ENCODE measurements at regions of chr1 and their contacts with region 1.

Region 1: GRCh38 chr1:85109475-85109874 is 61.2 kb upstream of the MCOLN3 start:
- DNase-seq: peak; percentile 54
- ATAC-seq: peak; percentile 99
- H3K4me3 ChIP-seq: no peak overlapping the region
- H3K27ac ChIP-seq: no peak overlapping the region
- H3K4me1 ChIP-seq: no peaks in the 10 kb centered on the region
- H3K27me3 ChIP-seq: no peaks in the 10 kb centered on the region; a peak in 1 of 5 replicates
- CTCF ChIP-seq: peak; percentile 85
- EP300 ChIP-seq: no peak
- POLR2A ChIP-seq: no peak
- RAD21 ChIP-seq: peak; percentile 79

Region 2: DNA sequence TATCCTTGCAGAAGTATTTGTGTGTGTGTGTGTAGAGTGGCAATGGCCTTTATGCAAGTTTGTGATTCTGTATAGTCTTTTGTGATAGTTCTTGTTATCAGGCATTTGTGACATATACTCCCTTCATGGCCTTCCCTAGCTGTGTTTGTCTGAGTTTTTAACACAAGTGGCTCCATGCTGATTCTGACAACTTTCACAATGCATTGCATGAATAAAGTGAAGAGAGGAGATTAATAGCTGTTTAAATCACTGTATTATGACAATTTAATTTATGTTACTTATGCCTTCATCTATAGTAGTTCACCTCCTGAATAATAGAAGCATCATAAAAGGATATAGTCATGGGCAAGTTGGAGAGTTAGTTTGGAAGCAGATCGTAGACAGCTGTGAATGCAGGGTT is 43.9 kb before region 1 on chr1:
- CTCF ChIA-PET with region 1: no interaction called
- POLR2A ChIA-PET with region 1: no interaction called
- in situ Hi-C with region 1: no loop called
- intact Hi-C with region 1: no loop called
- DNase-seq: no peak
- ATAC-seq: no peak
- H3K4me3 ChIP-seq: no peak overlapping the region
- H3K27ac ChIP-seq: no peak overlapping the region
- H3K4me1 ChIP-seq: no peaks in the 10 kb centered on the region
- H3K27me3 ChIP-seq: peaks cover 0 to 4% of the 10 kb centered on the region in 2 experiments; a peak in 1 of 5 replicates
- CTCF ChIP-seq: no peak
- EP300 ChIP-seq: no peak
- POLR2A ChIP-seq: no peak
- RAD21 ChIP-seq: no peak

Region 3: DNA sequence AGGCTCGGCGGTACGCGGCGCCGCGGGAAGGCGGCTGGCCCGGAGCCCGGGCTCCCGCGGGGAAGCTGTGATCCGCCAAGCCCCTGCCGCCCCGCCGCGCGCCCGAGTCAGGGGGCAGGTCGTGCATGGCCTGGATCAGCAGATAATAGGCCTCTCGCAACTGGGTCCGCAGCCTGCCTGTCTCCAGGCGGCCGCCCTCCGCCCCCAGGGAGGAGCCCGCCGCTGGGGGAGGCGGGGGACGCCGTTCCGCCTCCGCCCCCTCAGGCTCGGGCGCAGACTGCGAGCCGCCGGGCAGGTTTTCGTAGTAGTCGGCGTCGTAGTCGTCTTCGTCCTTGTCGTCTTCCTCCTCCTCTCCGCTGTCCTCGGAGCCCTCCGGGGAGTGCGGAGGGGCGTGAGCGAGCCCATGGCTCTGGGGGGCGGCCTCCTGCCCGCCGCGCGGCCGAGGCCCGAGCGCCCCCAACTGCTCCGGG is 91.4 kb after region 1 on chr1 and contains the start of gene SYDE2:
- CTCF ChIA-PET with region 1: no interaction called
- POLR2A ChIA-PET with region 1: no interaction called
- in situ Hi-C with region 1: no loop called
- intact Hi-C with region 1: loop called (anchors 1 kb)
- DNase-seq: peak; percentile 67
- ATAC-seq: peak; percentile 91
- H3K4me3 ChIP-seq: peak within 1 kb of the TSS; percentile 85 to 97 (median 85)
- H3K27ac ChIP-seq: peak within 1 kb of the TSS; percentile 86
- H3K4me1 ChIP-seq: peaks cover 28% of the 10 kb centered on the region
- H3K27me3 ChIP-seq: no peaks in the 10 kb centered on the region; a peak in 1 of 5 replicates
- CTCF ChIP-seq: no peak; the same call in 1 of the 2 replicates
- EP300 ChIP-seq: no peak
- POLR2A ChIP-seq: peak; percentile 59 to 67; a peak in 3 of 4 replicates
- RAD21 ChIP-seq: no peak
- total RNA-seq, gene SYDE2: 5.3 and 7.9 TPM in 2 replicates

Region 4: DNA sequence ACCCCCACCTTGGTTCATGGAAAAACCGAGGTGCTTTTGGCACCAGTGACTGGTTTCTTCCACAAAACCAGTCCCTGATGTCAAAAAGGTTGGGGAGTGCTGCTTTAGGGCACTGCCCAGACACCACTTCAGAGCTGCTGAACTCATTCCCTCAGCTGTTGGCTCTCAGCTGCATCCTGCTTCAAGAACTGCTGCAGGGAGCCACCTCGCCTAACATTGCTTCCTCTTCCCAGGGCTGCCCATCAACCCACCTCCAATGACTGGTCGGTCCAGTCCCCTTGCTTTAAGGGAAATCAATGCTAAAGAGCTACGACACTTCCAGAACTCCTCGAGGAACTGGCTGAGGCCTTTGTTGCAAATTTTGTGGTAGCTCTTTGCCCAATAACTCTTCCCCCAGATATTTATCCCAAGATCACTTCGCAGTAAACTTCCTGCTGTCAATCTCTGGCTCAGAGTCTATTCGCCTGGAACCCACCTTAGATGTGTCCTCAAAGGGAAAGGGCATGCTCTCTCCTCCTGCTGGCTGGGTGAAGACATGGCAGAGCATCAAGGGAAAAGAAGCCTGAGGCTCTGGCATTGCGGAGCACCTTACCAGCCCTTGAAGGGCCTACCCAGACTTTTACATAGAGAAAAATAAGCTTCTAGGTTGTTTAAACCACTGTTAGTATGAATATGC is 121.0 kb after region 1 on chr1:
- CTCF ChIA-PET with region 1: no interaction called
- POLR2A ChIA-PET with region 1: no interaction called
- in situ Hi-C with region 1: no loop called
- intact Hi-C with region 1: loop called (anchors 1 kb)
- DNase-seq: peak; percentile 21
- ATAC-seq: peak; percentile 94
- H3K4me3 ChIP-seq: no peak overlapping the region
- H3K27ac ChIP-seq: no peak overlapping the region
- H3K4me1 ChIP-seq: peaks cover 18% of the 10 kb centered on the region
- H3K27me3 ChIP-seq: no peaks in the 10 kb centered on the region
- CTCF ChIP-seq: peak; percentile 51
- EP300 ChIP-seq: no peak
- POLR2A ChIP-seq: no peak
- RAD21 ChIP-seq: no peak

Region 5: DNA sequence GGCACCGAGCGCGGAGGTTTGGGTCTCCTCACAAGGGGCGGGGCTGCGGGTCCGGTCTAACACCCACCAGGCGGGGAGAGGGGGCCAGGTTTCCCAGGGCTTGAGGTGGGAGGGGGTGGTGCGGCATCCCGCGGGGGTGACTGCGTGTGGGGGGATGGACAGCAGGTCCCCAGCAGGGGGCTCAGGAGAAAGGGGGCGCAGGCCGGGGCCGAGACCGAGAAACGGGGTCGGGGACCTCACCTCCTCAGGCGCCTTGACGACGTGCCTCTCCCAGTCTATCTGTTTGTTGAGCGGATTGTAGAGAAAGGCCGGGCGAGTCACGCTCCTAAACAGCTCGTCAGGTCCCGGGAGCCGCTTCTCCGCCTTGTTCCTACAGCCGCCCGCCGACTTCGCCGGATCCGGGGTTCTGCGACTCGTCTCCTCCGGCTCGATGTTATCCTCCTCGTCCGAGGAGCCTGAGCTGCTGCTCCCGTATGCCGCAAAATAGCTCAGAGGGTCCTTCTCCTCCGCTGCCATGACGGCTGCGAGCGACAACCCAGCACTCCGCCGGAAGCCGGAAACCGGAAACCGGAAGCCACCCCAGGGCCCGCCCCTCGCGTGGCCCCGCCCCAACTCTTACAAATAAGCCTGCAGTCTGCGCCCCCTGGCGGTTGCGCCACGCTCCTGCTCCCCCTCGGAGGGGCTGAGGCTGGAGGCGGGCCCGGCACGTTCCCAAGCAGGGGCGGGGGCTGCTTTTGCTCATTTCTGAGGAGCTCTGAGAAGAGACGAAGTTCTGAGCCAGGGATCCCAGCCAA is 149.8 kb after region 1 on chr1 and contains the start of gene C1orf52:
- CTCF ChIA-PET with region 1: interaction called, 34 read pairs
- POLR2A ChIA-PET with region 1: interaction called, 7 read pairs
- in situ Hi-C with region 1: loop called (anchors 5 kb)
- intact Hi-C with region 1: loop called (anchors 1 kb)
- DNase-seq: peak; percentile 78
- ATAC-seq: peak; percentile 97
- H3K4me3 ChIP-seq: peak within 1 kb of the TSS; percentile 93 to 100 (median 99)
- H3K27ac ChIP-seq: peak within 1 kb of the TSS; percentile 73
- H3K4me1 ChIP-seq: peaks cover 40% of the 10 kb centered on the region
- H3K27me3 ChIP-seq: no peaks in the 10 kb centered on the region; a peak in 1 of 5 replicates
- CTCF ChIP-seq: peak; percentile 92
- EP300 ChIP-seq: 0 out of 4 replicates have a peak, but pooled peaks of 1 of the 2 experiments have one; percentile 40
- POLR2A ChIP-seq: peak; percentile 87 to 91
- RAD21 ChIP-seq: peak; percentile 71
- total RNA-seq, gene C1orf52: 19.4 and 23.0 TPM in 2 replicates

Measured in HepG2 (cell line).